PC-3 (cell line): ENCODE measurements at regions of chr1 and their contacts with region 1.

Region 1: DNA sequence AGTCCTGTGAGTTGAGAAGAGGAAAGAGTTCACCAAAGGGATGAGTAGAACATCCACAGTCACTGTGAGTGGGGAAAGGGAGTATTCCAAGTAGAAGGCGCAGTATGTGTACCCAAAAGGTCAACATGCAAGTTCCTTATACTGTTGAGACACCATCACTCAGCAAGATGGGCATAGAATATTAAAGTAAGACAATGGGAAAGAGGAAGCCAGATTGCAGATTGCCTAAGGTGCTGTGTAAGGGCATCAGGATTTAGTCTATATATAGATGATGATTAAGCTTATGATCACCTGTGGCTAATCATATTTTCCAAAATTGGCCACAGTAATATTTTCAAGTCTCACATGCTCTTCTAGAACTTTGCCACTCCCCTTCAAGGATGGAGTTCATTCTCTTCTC is 120.1 kb upstream of the CAMK1G start:
- DNase-seq: no peak
- ATAC-seq: no peak
- H3K4me3 ChIP-seq: no peak overlapping the region
- H3K27ac ChIP-seq: no peak overlapping the region
- H3K4me1 ChIP-seq: no peaks in the 10 kb centered on the region
- H3K27me3 ChIP-seq: no peaks in the 10 kb centered on the region
- CTCF ChIP-seq: no peak

Region 2: DNA sequence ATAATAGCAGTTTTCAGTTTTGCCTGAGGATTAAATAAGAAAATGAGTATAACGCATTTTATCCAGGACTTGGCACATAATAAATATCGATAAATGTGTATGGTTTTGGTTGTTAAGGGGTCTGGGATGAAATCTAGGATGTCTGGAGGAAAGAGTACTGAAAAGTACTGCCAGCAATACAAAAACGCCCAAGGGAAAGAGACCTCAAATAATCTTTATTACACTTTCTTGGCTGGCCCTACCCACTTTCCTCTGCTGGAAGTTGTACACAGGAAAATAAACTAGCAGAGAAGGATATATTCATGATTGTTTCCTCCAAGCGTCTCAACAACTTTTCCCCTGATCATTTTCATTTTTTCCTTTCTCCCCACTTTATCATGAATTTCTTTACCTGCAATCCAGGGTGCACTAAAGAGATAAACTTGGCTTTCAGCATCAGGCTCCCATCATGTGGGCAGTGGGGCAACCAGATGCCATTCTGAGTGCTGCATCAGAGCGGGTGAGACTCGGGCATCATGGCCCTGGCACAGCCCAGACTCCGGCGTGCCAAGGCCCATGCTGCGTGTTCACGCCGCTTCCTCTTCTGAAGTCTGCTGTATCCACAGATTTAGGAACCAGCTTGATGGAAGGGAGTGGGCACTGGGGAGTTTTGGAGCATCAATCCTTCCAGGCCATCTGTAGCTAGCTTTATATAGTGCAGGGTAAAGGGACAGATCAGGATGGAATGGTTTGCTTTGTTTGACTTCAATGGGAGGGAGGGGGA is 1183.4 kb before region 1 on chr1:
- CTCF ChIA-PET with region 1: no interaction called
- POLR2A ChIA-PET with region 1: no interaction called
- intact Hi-C with region 1: no loop called
- DNase-seq: no peak
- ATAC-seq: no peak
- H3K4me3 ChIP-seq: no peak overlapping the region
- H3K27ac ChIP-seq: no peak overlapping the region
- H3K4me1 ChIP-seq: no peaks in the 10 kb centered on the region
- H3K27me3 ChIP-seq: peaks cover 76% of the 10 kb centered on the region
- CTCF ChIP-seq: no peak

Region 3: GRCh38 chr1:209428241-209428921 is 35.1 kb before region 1 on chr1:
- CTCF ChIA-PET with region 1: no interaction called
- POLR2A ChIA-PET with region 1: interaction called, 13 read pairs
- intact Hi-C with region 1: no loop called
- DNase-seq: peak; percentile 97
- ATAC-seq: peak; percentile 65
- H3K4me3 ChIP-seq: peak overlapping the region; percentile 88
- H3K27ac ChIP-seq: peak overlapping the region; percentile 88
- H3K4me1 ChIP-seq: peaks cover 39% of the 10 kb centered on the region
- H3K27me3 ChIP-seq: no peaks in the 10 kb centered on the region
- CTCF ChIP-seq: no peak